Left colon (tissue), 2 donors: ENCODE measurements at regions of chr9 and their contacts with region 1.

Region 1: DNA sequence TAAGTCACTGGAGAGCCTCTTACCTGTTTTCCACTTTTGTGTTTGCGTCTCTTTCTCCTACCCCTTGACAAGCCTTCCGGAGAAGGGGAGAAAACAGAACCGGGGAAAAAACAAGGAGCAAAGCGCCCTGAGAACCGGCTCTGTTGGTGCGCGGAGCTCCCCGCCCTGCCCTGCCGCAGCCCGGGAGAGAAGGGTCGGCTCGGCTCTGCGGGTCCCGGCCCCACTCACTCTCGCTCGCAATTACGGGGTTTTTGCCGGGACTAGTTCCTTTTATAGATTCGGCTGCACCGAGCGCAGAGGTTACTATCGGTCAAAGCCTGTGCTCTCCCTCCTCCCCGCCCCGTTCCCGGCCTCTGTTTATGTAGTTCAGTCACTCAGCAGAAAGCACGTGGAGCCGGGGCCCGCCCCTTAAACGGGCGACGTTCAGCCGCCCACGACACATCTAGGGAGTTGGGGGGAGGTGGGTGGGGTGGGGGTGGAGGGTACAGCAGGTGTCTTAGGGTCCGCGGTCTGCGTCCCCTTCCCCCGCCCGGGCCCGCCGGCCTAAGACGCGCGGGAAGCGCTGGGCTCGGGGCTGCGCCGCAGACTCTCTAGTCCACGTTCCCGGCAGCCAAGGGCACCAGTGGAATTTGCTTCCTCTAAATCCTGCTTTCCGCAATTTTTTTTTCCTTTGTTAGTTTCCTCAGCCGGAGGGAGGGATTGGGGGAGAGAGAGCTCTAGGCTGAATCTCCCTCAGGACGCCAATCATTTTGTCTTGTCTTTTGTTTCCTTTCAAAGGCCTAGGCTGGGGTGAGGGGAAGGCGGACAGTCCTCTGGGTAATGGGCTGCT is at the start of gene ABCA1:
- DNase-seq: peak; percentile 95 to 96
- ATAC-seq: peak; percentile 79
- total RNA-seq, gene ABCA1: 11.8 to 44.5 TPM

Region 2: GRCh38 chr9:105157130-105157583 is 229.0 kb after region 1 on chr9:
- intact Hi-C with region 1: loop called in 1 of 2 experiments (anchors 2 kb)
- DNase-seq: peak; percentile 50 to 81
- ATAC-seq: peak; percentile 85